CD14-positive monocyte (primary cell): ENCODE measurements at regions of chr11 and their contacts with region 1.

Region 1: GRCh38 chr11:30917859-30918478 is 331.8 kb upstream of the MPPED2 start:
- DNase-seq: peak; percentile 52 to 70 (median 64)
- H3K4me3 ChIP-seq: no peak overlapping the region
- H3K4me3 Mint-ChIP-seq: no peak overlapping the region
- H3K27ac ChIP-seq: peak overlapping the region in 1 of 2 donors; percentile 92
- H3K27ac Mint-ChIP-seq: peak overlapping the region; percentile 92 to 97 (median 95)
- H3K4me1 ChIP-seq: peaks cover 28 to 50% of the 10 kb centered on the region in 2 donors
- H3K4me1 Mint-ChIP-seq: peaks cover 47% of the 10 kb centered on the region
- H3K27me3 ChIP-seq: peaks cover 2 to 4% of the 10 kb centered on the region in 2 donors
- H3K27me3 Mint-ChIP-seq: peaks cover 11 to 19% (median 17%) of the 10 kb centered on the region in 3 donors
- CTCF ChIP-seq: peak; percentile 86

Region 2: DNA sequence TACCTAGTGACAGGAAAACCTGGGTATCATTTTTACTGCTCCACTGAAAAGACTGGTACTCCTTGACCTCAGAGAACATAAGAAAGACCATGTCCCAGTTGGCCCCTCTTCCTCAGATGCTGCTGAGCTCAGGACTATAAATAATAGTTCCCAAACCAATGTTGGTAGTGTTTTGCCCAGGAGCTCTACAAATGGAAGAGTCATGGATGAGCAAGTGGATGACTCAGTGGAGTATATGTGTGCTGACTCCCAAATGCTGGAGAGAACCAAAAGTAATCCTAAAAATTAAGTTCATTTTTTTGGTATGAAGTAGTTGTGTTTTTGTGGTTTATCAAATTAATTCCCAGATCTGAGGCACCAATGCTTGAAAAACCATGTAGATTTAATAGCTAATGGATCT is 1383.1 kb before region 1 on chr11:
- intact Hi-C with region 1: loop called in 1 of 2 experiments (anchors 10 kb)
- DNase-seq: no peak
- H3K4me3 ChIP-seq: no peak overlapping the region
- H3K4me3 Mint-ChIP-seq: no peak overlapping the region
- H3K27ac ChIP-seq: no peak overlapping the region
- H3K27ac Mint-ChIP-seq: no peak overlapping the region
- H3K4me1 ChIP-seq: peaks cover 5 to 21% of the 10 kb centered on the region in 2 donors
- H3K4me1 Mint-ChIP-seq: no peaks in the 10 kb centered on the region
- H3K27me3 ChIP-seq: no peaks in the 10 kb centered on the region
- H3K27me3 Mint-ChIP-seq: peaks cover 0 to 2% (median 1%) of the 10 kb centered on the region in 3 donors
- CTCF ChIP-seq: no peak

Region 3: GRCh38 chr11:30346068-30346688 is 571.8 kb before region 1 on chr11:
- intact Hi-C with region 1: loop called (anchors 5 to 10 kb)
- DNase-seq: peak; percentile 34 to 59 (median 53)
- H3K4me3 ChIP-seq: no peak overlapping the region
- H3K4me3 Mint-ChIP-seq: no peak overlapping the region
- H3K27ac ChIP-seq: no peak overlapping the region
- H3K27ac Mint-ChIP-seq: no peak overlapping the region
- H3K4me1 ChIP-seq: peaks cover 9 to 27% of the 10 kb centered on the region in 2 donors
- H3K4me1 Mint-ChIP-seq: peaks cover 14% of the 10 kb centered on the region
- H3K27me3 ChIP-seq: no peaks in the 10 kb centered on the region
- H3K27me3 Mint-ChIP-seq: peaks cover 0 to 6% (median 2%) of the 10 kb centered on the region in 3 donors
- CTCF ChIP-seq: peak; percentile 77

Region 4: DNA sequence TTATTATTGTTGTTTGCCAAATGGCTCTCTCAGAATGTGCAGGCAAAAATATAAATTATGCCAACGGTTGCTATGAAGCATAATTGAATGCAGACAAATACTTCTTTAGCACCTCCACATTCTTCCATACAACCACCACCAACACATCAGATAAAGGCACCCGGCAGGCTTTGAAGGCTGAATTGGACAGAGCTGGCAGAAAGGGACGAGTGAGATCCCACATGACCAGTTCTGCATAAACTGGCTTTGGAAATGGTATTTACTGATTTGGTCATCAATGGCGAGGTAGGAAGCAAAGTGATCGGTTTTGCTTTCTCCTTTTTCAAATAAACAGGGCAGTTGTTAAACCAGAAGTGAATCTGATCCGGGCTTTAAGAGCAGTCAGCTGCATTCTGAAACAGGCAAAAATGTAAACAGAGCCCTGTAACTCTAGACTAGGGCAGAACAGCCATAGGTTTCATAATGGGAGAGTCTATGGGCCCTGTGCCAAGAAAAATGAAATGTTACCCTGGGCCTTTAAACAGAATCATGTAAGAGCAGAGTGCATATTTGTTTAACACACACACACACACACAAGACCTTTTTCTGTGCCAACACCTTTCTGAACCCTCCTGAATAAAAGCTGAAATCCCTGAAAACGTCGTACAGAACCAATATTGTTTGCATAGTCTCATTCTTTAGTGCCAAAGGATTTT is 429.5 kb before region 1 on chr11:
- intact Hi-C with region 1: loop called in 1 of 2 experiments (anchors 10 kb)
- DNase-seq: peak in 1 of 3 donors; percentile 6
- H3K4me3 ChIP-seq: no peak overlapping the region
- H3K4me3 Mint-ChIP-seq: no peak overlapping the region
- H3K27ac ChIP-seq: peak overlapping the region in 1 of 2 donors; percentile 84
- H3K27ac Mint-ChIP-seq: peak overlapping the region in 6 of 7 donors; percentile 7 to 84 (median 56)
- H3K4me1 ChIP-seq: peaks cover 42 to 56% of the 10 kb centered on the region in 2 donors
- H3K4me1 Mint-ChIP-seq: peaks cover 50% of the 10 kb centered on the region
- H3K27me3 ChIP-seq: no peaks in the 10 kb centered on the region
- H3K27me3 Mint-ChIP-seq: peaks cover 0 to 2% (median 2%) of the 10 kb centered on the region in 3 donors
- CTCF ChIP-seq: no peak